ENCODE measurements at regions of chr9 and their contacts with region 1.

Region 1: DNA sequence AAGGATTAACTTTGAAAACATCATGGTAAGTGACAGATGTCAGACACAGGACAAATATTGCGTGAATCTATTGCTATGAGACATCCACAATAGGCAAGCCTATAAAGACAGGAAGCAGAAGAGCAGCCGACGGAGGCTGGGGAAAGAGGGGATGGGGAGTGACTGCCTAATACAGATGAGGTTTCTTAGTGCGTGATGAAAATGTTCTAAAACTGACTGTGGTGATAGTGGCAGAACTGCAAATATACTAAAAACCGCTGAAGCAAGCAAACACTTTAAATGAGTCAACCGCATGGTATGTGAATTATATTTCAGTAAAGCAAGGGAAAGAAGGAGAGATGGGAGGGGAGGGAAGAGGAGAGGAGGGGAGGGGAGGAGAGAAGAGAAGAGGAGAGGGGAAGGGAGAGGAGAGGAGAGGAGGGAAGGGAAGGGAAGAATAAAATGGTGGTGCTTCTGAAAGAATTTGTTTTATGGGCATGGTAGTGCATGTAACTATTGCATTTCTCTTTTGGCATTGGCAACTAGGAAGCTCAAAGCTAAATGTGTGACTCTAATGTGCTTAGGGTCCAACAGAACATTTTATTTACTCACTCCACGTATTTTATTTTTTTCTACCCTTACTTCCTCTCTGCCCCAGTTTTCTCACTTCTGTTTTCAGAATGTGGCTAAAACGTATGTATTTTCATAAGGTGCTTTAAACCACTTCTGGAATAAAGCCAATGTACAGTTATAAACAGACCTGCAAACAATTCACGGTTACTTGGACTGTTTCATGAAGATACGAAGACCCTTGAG is 21.3 kb downstream of the AKNA start:
- DNase-seq: peak in 3 of 5 donors; percentile 71 to 78 (median 75)
- H3K4me3 ChIP-seq: peak overlapping the region; percentile 16
- H3K4me3 Mint-ChIP-seq: peak overlapping the region; percentile 47 to 82 (median 73)
- H3K27ac ChIP-seq: peak overlapping the region; percentile 68
- H3K27ac Mint-ChIP-seq: peak overlapping the region; percentile 55 to 99 (median 96)
- H3K4me1 ChIP-seq: peaks cover 98% of the 10 kb centered on the region
- H3K4me1 Mint-ChIP-seq: peaks cover 85 to 100% (median 90%) of the 10 kb centered on the region in 3 donors
- H3K27me3 ChIP-seq: no peaks in the 10 kb centered on the region
- H3K27me3 Mint-ChIP-seq: peaks cover 0 to 4% of the 10 kb centered on the region in 2 donors

Region 2: DNA sequence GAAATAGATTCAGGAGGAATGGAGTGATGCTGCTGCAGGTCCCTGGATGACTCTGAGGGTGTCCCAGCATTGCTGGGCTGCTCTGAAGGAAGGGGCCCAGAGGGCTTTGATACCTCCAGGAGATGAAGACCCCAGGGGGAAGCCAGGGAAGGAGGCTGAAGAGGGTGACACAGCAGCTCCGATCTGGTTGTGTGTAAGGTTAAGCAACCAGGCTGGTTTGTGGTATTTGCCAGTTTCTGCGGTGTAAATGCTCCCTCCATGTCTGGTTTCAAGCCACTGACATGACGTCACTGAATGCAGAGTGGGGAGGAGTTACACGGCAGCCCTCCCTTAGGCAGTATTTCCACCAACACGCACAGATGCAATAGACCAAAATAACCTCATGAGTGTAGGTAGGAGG is 83.6 kb before region 1 on chr9:
- CTCF ChIA-PET with region 1: no interaction called
- POLR2A ChIA-PET with region 1: no interaction called
- DNase-seq: peak in 1 of 5 donors; percentile 49
- H3K4me3 ChIP-seq: no peak overlapping the region
- H3K4me3 Mint-ChIP-seq: no peak overlapping the region
- H3K27ac ChIP-seq: no peak overlapping the region
- H3K27ac Mint-ChIP-seq: no peak overlapping the region
- H3K4me1 ChIP-seq: no peaks in the 10 kb centered on the region
- H3K4me1 Mint-ChIP-seq: peaks cover 0 to 3% (median 0%) of the 10 kb centered on the region in 3 donors
- H3K27me3 ChIP-seq: no peaks in the 10 kb centered on the region
- H3K27me3 Mint-ChIP-seq: peaks cover 0 to 6% of the 10 kb centered on the region in 2 donors

Region 3: DNA sequence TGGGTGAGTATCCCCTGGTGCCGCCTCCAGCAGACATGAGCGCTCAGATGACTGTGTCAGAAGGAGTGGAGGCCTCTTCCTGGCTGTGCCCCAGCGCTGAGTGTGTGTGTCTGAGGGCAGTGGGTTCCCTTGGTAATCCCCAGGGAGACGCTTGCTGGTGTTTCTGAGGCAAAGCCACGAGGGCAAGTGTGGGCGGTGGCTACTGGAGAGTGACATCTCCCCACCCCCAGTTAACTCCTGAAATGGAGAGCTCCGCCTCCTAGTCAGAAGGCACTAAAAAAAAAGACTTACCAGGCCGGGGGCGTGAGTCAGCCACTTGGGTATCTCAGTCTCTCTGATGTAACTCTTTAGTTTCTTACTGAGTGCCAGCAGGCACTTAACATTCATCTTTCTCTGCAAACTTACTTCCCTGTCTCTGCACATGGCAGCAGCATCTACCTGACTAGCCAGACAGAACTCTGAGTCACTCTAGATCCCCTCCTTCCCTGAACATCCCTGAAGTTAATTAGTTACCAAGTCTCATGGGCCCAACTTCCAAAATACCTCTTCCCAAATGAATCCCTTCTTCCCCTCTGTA is 17.5 kb before region 1 on chr9:
- CTCF ChIA-PET with region 1: interaction called, 4 read pairs
- POLR2A ChIA-PET with region 1: interaction called, 14 read pairs
- DNase-seq: peak; percentile 44 to 72 (median 60)
- H3K4me3 ChIP-seq: no peak overlapping the region
- H3K4me3 Mint-ChIP-seq: peak overlapping the region in 3 of 7 donors; percentile 32 to 61 (median 59)
- H3K27ac ChIP-seq: peak overlapping the region; percentile 33
- H3K27ac Mint-ChIP-seq: peak overlapping the region; percentile 82 to 97 (median 92)
- H3K4me1 ChIP-seq: peaks cover 41% of the 10 kb centered on the region
- H3K4me1 Mint-ChIP-seq: peaks cover 44 to 76% (median 48%) of the 10 kb centered on the region in 3 donors
- H3K27me3 ChIP-seq: no peaks in the 10 kb centered on the region
- H3K27me3 Mint-ChIP-seq: peaks cover 0 to 2% of the 10 kb centered on the region in 2 donors